ENCODE measurements at regions of chr5 and their contacts with region 1.

Region 1: GRCh38 chr5:16489322-16489791 is 23.8 kb upstream of the ZNF622 start:
- DNase-seq: peak; percentile 48
- H3K4me3 Mint-ChIP-seq: no peak overlapping the region
- H3K27ac Mint-ChIP-seq: peak overlapping the region; percentile 29
- H3K4me1 Mint-ChIP-seq: peaks cover 16% of the 10 kb centered on the region
- H3K27me3 Mint-ChIP-seq: no peaks in the 10 kb centered on the region
- CTCF ChIP-seq: peak; percentile 68

Region 2: GRCh38 chr5:16160706-16161105 is 328.7 kb before region 1 on chr5:
- CTCF ChIA-PET with region 1: interaction called, 6 read pairs
- POLR2A ChIA-PET with region 1: no interaction called
- intact Hi-C with region 1: loop called (anchors 1 kb)
- DNase-seq: peak; percentile 68
- H3K4me3 Mint-ChIP-seq: no peak overlapping the region
- H3K27ac Mint-ChIP-seq: no peak overlapping the region
- H3K4me1 Mint-ChIP-seq: no peaks in the 10 kb centered on the region
- H3K27me3 Mint-ChIP-seq: peaks cover 53% of the 10 kb centered on the region
- CTCF ChIP-seq: peak; percentile 62

Region 3: GRCh38 chr5:16539169-16539721 is 49.9 kb after region 1 on chr5:
- CTCF ChIA-PET with region 1: interaction called, 147 read pairs
- POLR2A ChIA-PET with region 1: interaction called, 15 read pairs
- intact Hi-C with region 1: no loop called
- DNase-seq: peak; percentile 78
- H3K4me3 Mint-ChIP-seq: peak overlapping the region; percentile 28
- H3K27ac Mint-ChIP-seq: peak overlapping the region; percentile 91
- H3K4me1 Mint-ChIP-seq: peaks cover 18% of the 10 kb centered on the region
- H3K27me3 Mint-ChIP-seq: no peaks in the 10 kb centered on the region
- CTCF ChIP-seq: no peak

Region 4: GRCh38 chr5:16666883-16667398 is 177.6 kb after region 1 on chr5:
- CTCF ChIA-PET with region 1: interaction called, 73 read pairs
- POLR2A ChIA-PET with region 1: interaction called, 5 read pairs
- intact Hi-C with region 1: loop called (anchors 2 kb)
- DNase-seq: peak; percentile 36
- H3K4me3 Mint-ChIP-seq: no peak overlapping the region
- H3K27ac Mint-ChIP-seq: no peak overlapping the region
- H3K4me1 Mint-ChIP-seq: no peaks in the 10 kb centered on the region
- H3K27me3 Mint-ChIP-seq: no peaks in the 10 kb centered on the region
- CTCF ChIP-seq: peak; percentile 34

Region 5: DNA sequence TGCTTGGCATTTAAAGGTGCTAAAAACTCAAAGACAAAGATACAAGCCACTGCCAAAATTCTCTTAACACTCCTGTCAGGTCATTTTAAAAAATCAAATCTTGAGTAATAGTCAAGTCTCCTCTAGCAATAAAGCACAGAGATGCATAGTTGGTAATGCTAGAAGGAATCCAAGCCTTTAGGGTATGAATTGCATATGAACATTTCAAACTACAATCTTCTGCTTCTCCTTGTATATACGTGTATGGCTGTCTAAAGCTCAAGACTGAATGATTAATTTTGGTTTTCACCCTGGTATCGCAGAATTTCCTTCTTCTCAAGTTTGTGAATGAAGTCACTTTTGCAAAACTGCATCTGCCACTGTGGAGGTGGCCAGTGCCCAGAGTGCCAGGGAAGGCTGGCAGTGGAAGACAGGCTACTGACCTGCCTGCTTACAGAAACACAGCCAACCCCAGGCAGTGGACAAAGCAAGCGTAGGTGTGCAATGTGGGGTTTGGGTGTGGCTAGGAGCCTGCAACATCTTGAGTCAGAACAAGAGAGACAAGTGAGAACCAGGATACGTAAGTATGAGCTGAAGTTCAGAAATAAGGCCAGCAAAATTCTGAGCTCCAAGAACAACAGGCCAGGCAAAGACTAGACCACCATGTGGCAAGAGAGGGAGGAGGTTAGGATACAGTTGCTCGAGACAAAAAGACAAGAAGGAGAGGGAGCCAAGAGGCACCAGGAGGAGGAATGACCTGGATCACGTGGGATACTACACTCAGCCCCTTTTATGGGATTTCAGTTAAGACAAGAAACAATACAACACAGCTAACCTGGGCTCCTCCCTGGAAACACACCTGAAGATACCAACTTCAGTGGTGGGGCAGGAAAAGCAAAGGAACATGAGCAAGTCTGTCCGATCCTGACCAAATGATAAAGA is 424.1 kb after region 1 on chr5:
- CTCF ChIA-PET with region 1: no interaction called
- POLR2A ChIA-PET with region 1: no interaction called
- intact Hi-C with region 1: no loop called
- DNase-seq: peak; percentile 93
- H3K4me3 Mint-ChIP-seq: peak overlapping the region; percentile 57
- H3K27ac Mint-ChIP-seq: peak overlapping the region; percentile 90
- H3K4me1 Mint-ChIP-seq: peaks cover 43% of the 10 kb centered on the region
- H3K27me3 Mint-ChIP-seq: no peaks in the 10 kb centered on the region
- CTCF ChIP-seq: no peak

Region 6: GRCh38 chr5:17204133-17204489 is 714.8 kb after region 1 on chr5:
- CTCF ChIA-PET with region 1: interaction called, 3 read pairs
- POLR2A ChIA-PET with region 1: no interaction called
- intact Hi-C with region 1: loop called (anchors 1 kb)
- DNase-seq: no peak
- H3K4me3 Mint-ChIP-seq: no peak overlapping the region
- H3K27ac Mint-ChIP-seq: no peak overlapping the region
- H3K4me1 Mint-ChIP-seq: no peaks in the 10 kb centered on the region
- H3K27me3 Mint-ChIP-seq: peaks cover 12% of the 10 kb centered on the region
- CTCF ChIP-seq: no peak

Region 7: DNA sequence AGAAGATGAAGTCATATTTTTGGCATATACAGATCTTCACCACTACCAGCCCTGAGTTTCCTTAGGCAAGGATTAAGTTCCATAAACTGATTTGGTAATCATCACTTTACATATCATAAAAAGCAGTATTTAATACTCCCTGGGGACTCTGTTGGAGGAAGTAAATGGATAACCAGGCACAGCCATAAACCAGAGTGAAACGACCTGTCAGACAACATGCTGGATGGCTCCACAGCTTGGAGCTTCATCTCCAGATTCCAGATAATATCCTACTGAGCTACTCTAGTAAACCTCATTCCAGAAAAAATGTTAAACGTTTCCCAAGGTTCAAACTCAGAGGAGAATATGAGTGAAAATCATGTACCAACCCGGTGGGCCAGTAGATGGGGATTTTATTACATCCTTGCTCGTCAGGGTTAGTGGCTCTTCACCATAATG is 837.3 kb after region 1 on chr5:
- CTCF ChIA-PET with region 1: no interaction called
- POLR2A ChIA-PET with region 1: no interaction called
- intact Hi-C with region 1: no loop called
- DNase-seq: no peak
- H3K4me3 Mint-ChIP-seq: no peak overlapping the region
- H3K27ac Mint-ChIP-seq: no peak overlapping the region
- H3K4me1 Mint-ChIP-seq: no peaks in the 10 kb centered on the region
- H3K27me3 Mint-ChIP-seq: no peaks in the 10 kb centered on the region
- CTCF ChIP-seq: no peak